ENCODE measurements at regions of chr18 and their contacts with region 1.

Region 1: DNA sequence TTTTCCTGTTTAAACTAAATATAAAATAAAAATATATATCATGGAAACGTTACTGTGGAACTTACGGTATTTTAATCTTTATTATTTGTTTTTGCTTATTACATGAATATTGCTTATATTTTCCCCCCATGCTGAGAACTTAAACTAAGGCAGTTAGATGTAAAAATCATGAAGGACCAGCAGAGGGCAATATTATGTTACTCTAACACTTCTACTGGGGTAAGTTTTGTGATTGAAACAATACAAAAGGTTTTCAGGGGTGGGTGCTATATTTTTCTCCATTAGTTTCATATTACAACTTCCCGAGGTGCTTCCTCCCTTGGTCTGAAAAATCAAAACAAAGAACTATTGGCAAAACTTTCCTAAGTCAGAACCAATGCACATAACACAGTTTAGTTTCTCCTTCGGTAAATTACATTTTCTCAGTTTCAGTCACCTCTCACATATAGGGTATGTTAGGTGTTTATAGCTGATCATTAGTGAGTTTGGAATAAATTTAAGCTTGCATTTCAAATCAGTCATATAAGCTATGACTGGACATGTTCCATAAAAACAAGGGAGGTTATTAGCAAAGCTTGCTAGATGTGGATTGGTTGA is 54.8 kb downstream of the ZNF407 start:
- DNase-seq: no peak
- ATAC-seq: peak in 2 of 8 donors; percentile 27 to 37
- H3K4me3 ChIP-seq: no peak overlapping the region
- H3K27ac ChIP-seq: no peak overlapping the region
- H3K4me1 ChIP-seq: peaks cover 0 to 4% (median 0%) of the 10 kb centered on the region in 9 donors
- H3K27me3 ChIP-seq: no peaks in the 10 kb centered on the region
- CTCF ChIP-seq: peak; percentile 41 to 76 (median 65)

Region 2: GRCh38 chr18:74880706-74881278 is 228.3 kb after region 1 on chr18:
- intact Hi-C with region 1: loop called in 1 of 10 experiments (anchors 10 kb)
- DNase-seq: no peak
- ATAC-seq: no peak
- H3K4me3 ChIP-seq: no peak overlapping the region
- H3K27ac ChIP-seq: no peak overlapping the region
- H3K4me1 ChIP-seq: no peaks in the 10 kb centered on the region
- H3K27me3 ChIP-seq: no peaks in the 10 kb centered on the region
- CTCF ChIP-seq: no peak

Region 3: GRCh38 chr18:74951165-74951760 is 298.8 kb after region 1 on chr18:
- intact Hi-C with region 1: loop called in 1 of 10 experiments (anchors 10 kb)
- DNase-seq: peak in 1 of 2 donors; percentile 13
- ATAC-seq: peak in 7 of 8 donors; percentile 33 to 80 (median 72)
- H3K4me3 ChIP-seq: no peak overlapping the region
- H3K27ac ChIP-seq: peak overlapping the region in 3 of 10 donors; percentile 2 to 52 (median 11)
- H3K4me1 ChIP-seq: peaks cover 0 to 23% (median 12%) of the 10 kb centered on the region in 9 donors
- H3K27me3 ChIP-seq: no peaks in the 10 kb centered on the region
- CTCF ChIP-seq: no peak

Region 4: DNA sequence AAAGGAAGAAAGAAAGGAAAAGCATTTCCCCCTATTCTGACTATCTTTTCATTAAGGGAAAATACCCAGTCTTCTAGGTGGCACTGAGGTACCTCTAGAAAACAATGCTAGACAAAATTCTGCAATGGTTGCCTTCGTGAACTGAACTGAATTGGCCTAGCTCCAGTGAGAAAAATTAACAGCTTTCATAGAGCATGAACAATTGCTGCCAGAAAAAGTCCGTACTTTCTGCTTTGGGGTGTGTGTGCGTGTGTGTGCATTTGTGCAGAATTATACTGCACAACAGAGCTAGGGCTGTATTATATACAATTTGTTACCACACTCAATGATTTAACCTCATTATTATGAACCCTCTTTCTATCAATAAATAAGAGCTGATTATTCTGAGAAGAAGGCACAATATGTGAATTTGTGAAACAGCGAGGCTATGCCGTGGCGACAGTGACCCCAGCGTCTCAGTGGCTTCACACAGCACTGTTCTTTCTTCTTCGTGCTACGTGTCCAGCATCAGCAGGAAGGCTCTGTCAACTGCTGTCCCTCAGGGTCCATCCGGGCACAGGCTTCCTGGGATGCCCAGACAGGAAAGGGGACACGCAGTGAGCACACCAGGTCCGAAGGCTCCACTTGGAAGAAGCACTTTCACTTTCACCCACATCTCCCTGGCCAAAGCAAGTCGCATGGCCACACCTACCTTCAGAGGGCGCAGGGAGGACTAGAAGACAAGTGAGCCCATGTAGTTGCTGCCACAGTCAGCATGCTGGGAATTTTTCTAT is 509.0 kb after region 1 on chr18:
- intact Hi-C with region 1: loop called in 3 of 10 experiments (anchors 10 kb)
- DNase-seq: peak in 1 of 2 donors; percentile 28
- ATAC-seq: peak; percentile 32 to 86 (median 72)
- H3K4me3 ChIP-seq: peak overlapping the region in 9 of 10 donors; percentile 24 to 62 (median 49)
- H3K27ac ChIP-seq: peak overlapping the region in 6 of 10 donors; percentile 20 to 50 (median 40)
- H3K4me1 ChIP-seq: peaks cover 0 to 16% (median 5%) of the 10 kb centered on the region in 9 donors
- H3K27me3 ChIP-seq: no peaks in the 10 kb centered on the region
- CTCF ChIP-seq: peak in 5 of 9 donors; percentile 4 to 30 (median 11)

Region 5: GRCh38 chr18:75489493-75490190 is 837.2 kb after region 1 on chr18:
- intact Hi-C with region 1: loop called in 2 of 10 experiments (anchors 10 kb)
- DNase-seq: no peak
- ATAC-seq: peak in 5 of 8 donors; percentile 38 to 87 (median 62)
- H3K4me3 ChIP-seq: no peak overlapping the region
- H3K27ac ChIP-seq: no peak overlapping the region
- H3K4me1 ChIP-seq: no peaks in the 10 kb centered on the region
- H3K27me3 ChIP-seq: peaks cover 0 to 7% (median 0%) of the 10 kb centered on the region in 7 donors
- CTCF ChIP-seq: no peak

Region 6: DNA sequence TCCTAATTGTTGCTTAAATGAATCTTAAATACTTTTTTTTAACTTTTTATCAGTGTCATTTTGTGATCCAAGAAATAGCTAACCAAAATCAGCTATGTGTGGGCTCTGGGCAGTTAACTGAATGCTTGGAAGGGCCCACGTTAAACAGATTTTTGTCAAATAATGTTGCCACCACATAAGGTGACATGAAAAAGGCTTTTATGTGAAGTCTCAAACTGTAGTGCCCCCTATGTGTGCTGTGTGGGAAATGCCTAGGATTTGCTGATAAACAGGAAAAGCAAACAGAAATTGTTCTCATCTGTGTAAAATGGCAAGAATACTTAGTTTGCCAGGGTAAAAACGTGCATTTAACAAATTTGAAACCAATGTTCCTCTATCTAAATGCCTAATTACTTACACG is 1600.4 kb after region 1 on chr18:
- intact Hi-C with region 1: loop called in 1 of 10 experiments (anchors 10 kb)
- DNase-seq: no peak
- ATAC-seq: no peak
- H3K4me3 ChIP-seq: no peak overlapping the region
- H3K27ac ChIP-seq: no peak overlapping the region
- H3K4me1 ChIP-seq: peaks cover 0 to 3% (median 0%) of the 10 kb centered on the region in 9 donors
- H3K27me3 ChIP-seq: peaks cover 0 to 20% (median 5%) of the 10 kb centered on the region in 7 donors
- CTCF ChIP-seq: peak in 7 of 9 donors; percentile 14 to 45 (median 41)

Measured in heart right ventricle (tissue), 16 donors.